Calu3 (cell line): ENCODE measurements at regions of chr6 and their contacts with region 1.

Region 1: GRCh38 chr6:39309942-39310531 is 4.2 kb downstream of the KCNK17 start:
- DNase-seq: peak; percentile 91
- H3K4me3 Mint-ChIP-seq: no peak overlapping the region
- H3K27ac Mint-ChIP-seq: no peak overlapping the region
- H3K4me1 Mint-ChIP-seq: no peaks in the 10 kb centered on the region
- H3K27me3 Mint-ChIP-seq: peaks cover 64% of the 10 kb centered on the region
- CTCF ChIP-seq: peak; percentile 96

Region 2: DNA sequence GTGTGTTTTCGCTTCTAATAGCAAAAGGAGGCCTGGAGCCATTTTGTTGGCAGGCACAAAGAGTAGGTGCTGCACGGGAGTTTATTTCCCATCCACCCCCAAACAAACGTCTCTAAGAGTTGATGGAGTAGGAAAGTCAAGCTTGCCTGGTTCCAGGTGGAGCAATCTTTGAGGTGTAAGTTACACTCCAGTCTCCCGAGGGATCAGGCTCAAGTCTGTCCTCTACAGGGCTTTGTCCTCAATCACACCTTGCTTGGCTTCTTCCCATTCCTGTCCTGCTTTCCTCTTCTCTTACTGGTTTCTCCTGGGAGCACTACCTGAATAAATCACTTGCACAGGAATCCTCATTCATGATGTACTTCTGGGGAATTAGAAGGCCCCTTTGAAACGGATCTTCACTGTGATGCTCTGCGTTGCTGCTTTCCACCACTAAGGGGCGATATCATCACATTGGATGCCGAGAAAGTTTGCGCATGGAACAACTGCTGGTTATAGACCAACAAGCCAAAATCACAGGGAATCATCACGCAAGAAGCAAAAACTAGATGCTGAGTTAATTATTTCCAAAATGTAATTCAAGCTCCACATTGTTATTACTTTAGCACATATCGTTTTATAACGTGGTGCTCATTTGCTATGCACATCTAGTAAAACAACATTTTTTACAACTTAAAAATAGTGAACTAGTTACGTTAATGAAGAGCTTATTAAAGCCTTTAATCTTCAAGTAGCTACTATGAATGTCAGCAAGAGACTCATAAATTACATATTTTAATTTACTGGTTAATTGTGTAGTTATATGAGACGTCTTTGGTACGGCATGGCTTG is 438.1 kb before region 1 on chr6:
- CTCF ChIA-PET with region 1: no interaction called
- intact Hi-C with region 1: loop called (anchors 2 kb)
- DNase-seq: peak; percentile 74
- H3K4me3 Mint-ChIP-seq: no peak overlapping the region
- H3K27ac Mint-ChIP-seq: no peak overlapping the region
- H3K4me1 Mint-ChIP-seq: no peaks in the 10 kb centered on the region
- H3K27me3 Mint-ChIP-seq: peaks cover 15% of the 10 kb centered on the region
- CTCF ChIP-seq: peak; percentile 91

Region 3: GRCh38 chr6:38973178-38974054 is 336.6 kb before region 1 on chr6:
- CTCF ChIA-PET with region 1: no interaction called
- intact Hi-C with region 1: loop called (anchors 1 kb)
- DNase-seq: peak; percentile 69
- H3K4me3 Mint-ChIP-seq: no peak overlapping the region
- H3K27ac Mint-ChIP-seq: no peak overlapping the region
- H3K4me1 Mint-ChIP-seq: no peaks in the 10 kb centered on the region
- H3K27me3 Mint-ChIP-seq: peaks cover 80% of the 10 kb centered on the region
- CTCF ChIP-seq: peak; percentile 30

Region 4: GRCh38 chr6:39003072-39003471 is 307.0 kb before region 1 on chr6:
- CTCF ChIA-PET with region 1: no interaction called
- intact Hi-C with region 1: loop called (anchors 2 kb)
- DNase-seq: peak; percentile 52
- H3K4me3 Mint-ChIP-seq: no peak overlapping the region
- H3K27ac Mint-ChIP-seq: no peak overlapping the region
- H3K4me1 Mint-ChIP-seq: no peaks in the 10 kb centered on the region
- H3K27me3 Mint-ChIP-seq: peaks cover 61% of the 10 kb centered on the region
- CTCF ChIP-seq: peak; percentile 37

Region 5: GRCh38 chr6:39361657-39362486 is 51.8 kb after region 1 on chr6:
- CTCF ChIA-PET with region 1: no interaction called
- intact Hi-C with region 1: no loop called
- DNase-seq: peak; percentile 84
- H3K4me3 Mint-ChIP-seq: peak overlapping the region; percentile 20
- H3K27ac Mint-ChIP-seq: no peak overlapping the region
- H3K4me1 Mint-ChIP-seq: peaks cover 13% of the 10 kb centered on the region
- H3K27me3 Mint-ChIP-seq: peaks cover 44% of the 10 kb centered on the region
- CTCF ChIP-seq: peak; percentile 73